ENCODE measurements at regions of chr4 and their contacts with region 1.

Region 1: DNA sequence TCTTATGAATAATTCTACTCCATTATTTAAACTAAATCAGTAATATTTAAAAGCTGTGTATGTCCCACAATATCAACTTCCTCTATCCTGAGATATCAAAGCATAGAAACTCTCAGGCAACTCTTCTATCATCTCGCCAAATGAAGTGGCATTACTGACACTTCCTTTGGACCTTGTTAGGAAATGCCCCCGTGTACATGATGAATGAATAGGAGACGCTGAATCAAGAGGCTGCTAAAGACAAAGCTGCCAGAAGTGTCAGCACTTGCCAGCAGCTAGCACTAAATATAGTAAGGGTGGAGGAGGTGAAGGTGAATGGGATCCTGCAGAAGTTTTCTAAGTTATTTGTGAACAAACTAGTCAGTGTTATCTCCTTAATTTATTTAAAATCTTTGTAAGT is 99.5 kb upstream of the BLTP1 start:
- DNase-seq: no peak
- ATAC-seq: no peak
- H3K4me3 ChIP-seq: no peak overlapping the region
- H3K27ac ChIP-seq: no peak overlapping the region
- H3K4me1 ChIP-seq: no peaks in the 10 kb centered on the region
- H3K27me3 ChIP-seq: no peaks in the 10 kb centered on the region
- CTCF ChIP-seq: no peak
- EP300 ChIP-seq: no peak
- POLR2A ChIP-seq: no peak
- RAD21 ChIP-seq: no peak

Region 2: GRCh38 chr4:121913667-121914066 is 139.0 kb before region 1 on chr4:
- CTCF ChIA-PET with region 1: no interaction called
- POLR2A ChIA-PET with region 1: no interaction called
- in situ Hi-C with region 1: no loop called
- intact Hi-C with region 1: no loop called
- DNase-seq: no peak
- ATAC-seq: no peak
- H3K4me3 ChIP-seq: no peak overlapping the region
- H3K27ac ChIP-seq: no peak overlapping the region
- H3K4me1 ChIP-seq: no peaks in the 10 kb centered on the region
- H3K27me3 ChIP-seq: no peaks in the 10 kb centered on the region; a peak in 1 of 5 replicates
- CTCF ChIP-seq: no peak
- EP300 ChIP-seq: no peak
- POLR2A ChIP-seq: no peak
- RAD21 ChIP-seq: no peak

Region 3: GRCh38 chr4:122010610-122011009 is 42.1 kb before region 1 on chr4:
- CTCF ChIA-PET with region 1: no interaction called
- POLR2A ChIA-PET with region 1: no interaction called
- in situ Hi-C with region 1: no loop called
- intact Hi-C with region 1: loop called (anchors 1 kb)
- DNase-seq: no peak
- ATAC-seq: no peak
- H3K4me3 ChIP-seq: no peak overlapping the region
- H3K27ac ChIP-seq: no peak overlapping the region
- H3K4me1 ChIP-seq: no peaks in the 10 kb centered on the region
- H3K27me3 ChIP-seq: no peaks in the 10 kb centered on the region; a peak in 1 of 5 replicates
- CTCF ChIP-seq: no peak
- EP300 ChIP-seq: no peak
- POLR2A ChIP-seq: no peak
- RAD21 ChIP-seq: no peak

Region 4: GRCh38 chr4:122065915-122066314 is 13.2 kb after region 1 on chr4:
- CTCF ChIA-PET with region 1: no interaction called
- POLR2A ChIA-PET with region 1: no interaction called
- in situ Hi-C with region 1: no loop called
- intact Hi-C with region 1: loop called (anchors 1 kb)
- DNase-seq: no peak
- ATAC-seq: no peak
- H3K4me3 ChIP-seq: no peak overlapping the region
- H3K27ac ChIP-seq: no peak overlapping the region
- H3K4me1 ChIP-seq: no peaks in the 10 kb centered on the region
- H3K27me3 ChIP-seq: no peaks in the 10 kb centered on the region
- CTCF ChIP-seq: no peak
- EP300 ChIP-seq: no peak
- POLR2A ChIP-seq: no peak
- RAD21 ChIP-seq: no peak

Region 5: DNA sequence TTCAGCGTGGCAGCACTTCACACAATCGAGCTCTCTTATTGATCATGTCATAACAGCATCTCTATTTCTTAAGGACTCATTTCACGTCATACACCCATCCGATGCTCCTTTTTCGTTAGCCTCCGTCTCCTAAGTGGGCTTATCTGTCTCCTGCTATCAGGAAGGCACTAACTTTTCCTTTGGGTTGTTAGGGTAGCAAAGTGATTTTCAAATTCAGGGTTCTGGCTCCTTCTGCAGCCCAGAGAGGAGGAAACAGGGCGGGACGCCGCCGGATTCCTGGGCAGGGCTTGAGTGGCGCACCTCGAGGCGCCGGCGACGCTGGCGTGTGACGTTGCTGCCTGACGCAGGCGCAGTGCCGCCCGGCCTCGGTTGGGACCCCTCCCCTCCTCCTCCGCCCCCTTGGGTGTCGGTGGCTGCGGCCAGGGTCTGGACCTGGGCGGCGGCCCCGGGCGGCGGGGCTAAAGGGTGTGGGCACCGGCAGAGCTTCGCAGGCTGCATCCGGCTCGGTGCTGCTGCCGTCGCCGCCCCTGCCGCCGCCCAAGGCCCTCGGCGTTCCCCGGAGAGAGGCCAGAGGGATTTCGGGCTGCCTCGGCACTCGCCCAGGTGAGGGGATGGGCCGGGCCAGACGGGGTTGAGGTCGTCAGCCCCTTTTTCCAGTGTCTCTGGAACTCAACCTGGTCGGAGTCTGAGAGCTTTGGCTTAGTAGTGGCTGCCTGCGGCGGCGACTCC is 99.5 kb after region 1 on chr4 and contains the start of gene BLTP1:
- CTCF ChIA-PET with region 1: no interaction called
- POLR2A ChIA-PET with region 1: no interaction called
- in situ Hi-C with region 1: no loop called
- intact Hi-C with region 1: no loop called
- DNase-seq: peak; percentile 75
- ATAC-seq: peak; percentile 97
- H3K4me3 ChIP-seq: peak within 1 kb of the TSS; percentile 79 to 94 (median 86)
- H3K27ac ChIP-seq: peak within 1 kb of the TSS; percentile 68
- H3K4me1 ChIP-seq: peaks cover 25% of the 10 kb centered on the region
- H3K27me3 ChIP-seq: no peaks in the 10 kb centered on the region; a peak in 1 of 5 replicates
- CTCF ChIP-seq: no peak
- EP300 ChIP-seq: no peak
- POLR2A ChIP-seq: peak in 1 of 2 experiments; percentile 73; a peak in 2 of 4 replicates
- RAD21 ChIP-seq: no peak
- total RNA-seq, gene BLTP1: 25.3 and 27.7 TPM in 2 replicates